ENCODE measurements at regions of chr19 and their contacts with region 1.

Region 1: GRCh38 chr19:38658462-38659306 is 11.2 kb downstream of the ACTN4 start:
- DNase-seq: no peak
- H3K4me3 Mint-ChIP-seq: no peak overlapping the region
- H3K27ac Mint-ChIP-seq: no peak overlapping the region
- H3K4me1 Mint-ChIP-seq: peaks cover 59% of the 10 kb centered on the region
- H3K27me3 Mint-ChIP-seq: peaks cover 13% of the 10 kb centered on the region

Region 2: DNA sequence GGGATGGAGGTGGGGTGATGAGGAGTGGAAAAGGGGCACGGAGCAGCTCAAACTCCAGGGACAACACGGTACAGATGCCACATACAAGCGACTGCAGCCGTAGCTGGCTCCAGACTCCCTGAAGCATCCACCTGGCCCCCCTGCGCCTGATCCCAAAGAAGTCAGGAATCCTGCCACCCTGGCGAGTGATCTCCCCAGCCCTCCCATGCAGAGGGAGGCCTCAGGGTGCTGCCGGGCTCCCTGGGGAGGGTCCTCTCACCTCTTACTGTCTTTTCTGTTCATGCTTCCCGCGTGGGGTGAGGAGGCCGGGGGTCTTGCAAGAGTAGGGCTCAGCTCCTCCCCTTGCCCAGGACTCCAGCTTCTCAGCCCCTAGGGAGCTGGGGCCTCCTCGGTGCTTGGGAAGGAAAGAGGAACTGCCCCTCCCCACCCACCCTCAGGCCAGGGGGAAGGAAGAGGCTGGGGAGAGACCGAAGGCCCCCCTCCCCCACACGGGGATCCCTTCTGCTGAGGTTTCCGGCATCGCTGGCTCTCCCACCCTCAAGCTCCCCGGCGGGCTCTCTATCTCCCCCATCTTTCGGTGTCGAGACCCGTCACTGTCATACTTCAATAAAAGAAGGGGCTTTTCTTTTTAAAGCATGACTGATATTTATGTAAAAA is 232.7 kb before region 1 on chr19 and contains the start of gene RASGRP4:
- CTCF ChIA-PET with region 1: no interaction called
- intact Hi-C with region 1: loop called (anchors 2 kb)
- DNase-seq: peak; percentile 78
- H3K4me3 Mint-ChIP-seq: no peak within 1 kb of the TSS
- H3K27ac Mint-ChIP-seq: peak within 1 kb of the TSS; percentile 61
- H3K4me1 Mint-ChIP-seq: peaks cover 31% of the 10 kb centered on the region
- H3K27me3 Mint-ChIP-seq: peaks cover 2% of the 10 kb centered on the region
- total RNA-seq, gene RASGRP4: 0.30 to 0.41 TPM

Region 3: DNA sequence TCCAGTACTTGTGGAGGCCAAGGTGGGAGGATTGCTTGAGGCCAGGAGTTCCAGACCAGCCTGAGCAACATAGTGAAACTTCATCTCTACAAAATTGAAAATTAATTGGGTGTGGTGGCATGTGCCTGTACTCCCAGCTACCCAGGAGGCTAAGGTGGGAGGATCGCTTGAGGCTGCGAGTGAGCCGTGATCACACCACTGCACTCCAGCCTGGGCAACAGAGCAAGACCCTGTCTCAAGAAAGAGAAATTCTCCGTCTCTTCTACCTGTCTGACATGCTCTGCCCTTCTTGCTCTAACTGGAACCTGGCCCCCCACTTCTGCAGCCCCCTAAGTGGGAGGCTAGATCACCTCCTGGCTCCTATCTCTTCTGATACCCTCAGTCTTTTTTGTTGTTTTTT is 32.3 kb before region 1 on chr19:
- CTCF ChIA-PET with region 1: no interaction called
- intact Hi-C with region 1: no loop called
- DNase-seq: no peak
- H3K4me3 Mint-ChIP-seq: no peak overlapping the region
- H3K27ac Mint-ChIP-seq: no peak overlapping the region
- H3K4me1 Mint-ChIP-seq: peaks cover 3% of the 10 kb centered on the region
- H3K27me3 Mint-ChIP-seq: no peaks in the 10 kb centered on the region

Region 4: DNA sequence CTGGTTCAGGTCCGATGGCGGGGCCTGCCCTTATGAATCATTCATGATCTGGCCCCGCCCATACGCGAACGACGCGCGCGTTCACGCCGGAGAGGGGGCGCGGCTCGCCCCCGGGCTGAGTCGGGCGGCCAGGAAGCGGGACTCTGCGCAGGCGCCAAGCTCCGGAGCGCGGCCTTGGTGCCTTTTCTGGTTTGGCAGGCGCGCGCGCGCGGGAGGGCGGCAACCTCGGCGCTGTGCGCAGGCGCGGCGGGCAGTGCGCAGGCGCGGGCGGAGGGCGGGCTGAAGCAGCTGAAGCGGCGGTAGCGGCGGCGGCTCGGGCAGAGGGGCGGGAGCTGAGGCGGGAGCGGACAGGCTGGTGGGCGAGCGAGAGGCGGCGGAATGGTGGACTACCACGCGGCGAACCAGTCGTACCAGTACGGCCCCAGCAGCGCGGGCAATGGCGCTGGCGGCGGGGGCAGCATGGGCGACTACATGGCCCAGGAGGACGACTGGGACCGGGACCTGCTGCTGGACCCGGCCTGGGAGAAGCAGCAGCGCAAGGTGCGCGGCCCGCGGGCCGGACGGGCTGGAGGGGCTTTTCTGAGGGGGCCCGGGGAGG is 11.2 kb before region 1 on chr19 and contains the start of gene ACTN4:
- CTCF ChIA-PET with region 1: interaction called, 5 read pairs
- intact Hi-C with region 1: loop called (anchors 1 kb)
- DNase-seq: peak; percentile 99
- H3K4me3 Mint-ChIP-seq: peak within 1 kb of the TSS; percentile 96
- H3K27ac Mint-ChIP-seq: peak within 1 kb of the TSS; percentile 30
- H3K4me1 Mint-ChIP-seq: peaks cover 30% of the 10 kb centered on the region
- H3K27me3 Mint-ChIP-seq: peaks cover 29% of the 10 kb centered on the region
- total RNA-seq, gene ACTN4: 117 to 119 TPM

Region 5: GRCh38 chr19:38685666-38686529 is 27.2 kb after region 1 on chr19:
- CTCF ChIA-PET with region 1: no interaction called
- intact Hi-C with region 1: loop called (anchors 1 kb)
- DNase-seq: peak; percentile 23
- H3K4me3 Mint-ChIP-seq: no peak overlapping the region
- H3K27ac Mint-ChIP-seq: peak overlapping the region; percentile 31
- H3K4me1 Mint-ChIP-seq: peaks cover 45% of the 10 kb centered on the region
- H3K27me3 Mint-ChIP-seq: no peaks in the 10 kb centered on the region

Region 6: DNA sequence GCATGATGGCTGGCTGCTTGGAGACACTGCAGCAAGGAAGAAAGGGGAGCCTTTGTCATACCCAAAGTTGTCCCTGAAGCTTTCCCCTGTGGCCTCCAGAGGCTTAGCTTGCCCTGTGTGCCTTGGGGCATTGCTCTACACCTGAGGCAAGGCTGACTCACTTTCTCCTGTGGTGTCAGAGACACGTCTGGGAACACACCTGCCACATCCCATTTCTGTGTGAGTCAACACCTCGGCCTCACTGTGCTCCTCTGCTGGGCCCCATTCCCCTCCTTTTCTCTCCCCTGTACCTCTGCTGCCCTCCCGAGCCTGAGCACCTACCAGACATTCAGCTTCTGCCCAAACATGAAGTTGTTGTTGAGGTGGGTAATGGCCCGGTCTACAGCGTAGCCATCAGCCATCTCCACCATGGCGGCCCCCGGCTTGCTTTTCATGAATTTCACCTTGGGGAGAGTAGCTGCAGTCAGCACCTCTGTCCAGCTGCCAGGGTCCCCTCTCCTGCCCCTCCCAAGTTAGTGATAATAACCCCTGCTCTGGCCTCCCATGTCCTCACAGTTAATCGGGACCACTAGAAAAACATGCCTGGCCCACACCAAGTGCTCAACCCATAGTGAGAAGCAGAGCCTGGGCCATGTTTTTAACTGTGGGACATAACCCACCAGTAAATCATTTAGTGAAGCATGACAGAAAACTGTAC is 180.0 kb after region 1 on chr19:
- CTCF ChIA-PET with region 1: no interaction called
- intact Hi-C with region 1: loop called (anchors 1 kb)
- DNase-seq: peak; percentile 94
- H3K4me3 Mint-ChIP-seq: peak overlapping the region; percentile 37
- H3K27ac Mint-ChIP-seq: peak overlapping the region; percentile 89
- H3K4me1 Mint-ChIP-seq: peaks cover 63% of the 10 kb centered on the region
- H3K27me3 Mint-ChIP-seq: no peaks in the 10 kb centered on the region

Region 7: DNA sequence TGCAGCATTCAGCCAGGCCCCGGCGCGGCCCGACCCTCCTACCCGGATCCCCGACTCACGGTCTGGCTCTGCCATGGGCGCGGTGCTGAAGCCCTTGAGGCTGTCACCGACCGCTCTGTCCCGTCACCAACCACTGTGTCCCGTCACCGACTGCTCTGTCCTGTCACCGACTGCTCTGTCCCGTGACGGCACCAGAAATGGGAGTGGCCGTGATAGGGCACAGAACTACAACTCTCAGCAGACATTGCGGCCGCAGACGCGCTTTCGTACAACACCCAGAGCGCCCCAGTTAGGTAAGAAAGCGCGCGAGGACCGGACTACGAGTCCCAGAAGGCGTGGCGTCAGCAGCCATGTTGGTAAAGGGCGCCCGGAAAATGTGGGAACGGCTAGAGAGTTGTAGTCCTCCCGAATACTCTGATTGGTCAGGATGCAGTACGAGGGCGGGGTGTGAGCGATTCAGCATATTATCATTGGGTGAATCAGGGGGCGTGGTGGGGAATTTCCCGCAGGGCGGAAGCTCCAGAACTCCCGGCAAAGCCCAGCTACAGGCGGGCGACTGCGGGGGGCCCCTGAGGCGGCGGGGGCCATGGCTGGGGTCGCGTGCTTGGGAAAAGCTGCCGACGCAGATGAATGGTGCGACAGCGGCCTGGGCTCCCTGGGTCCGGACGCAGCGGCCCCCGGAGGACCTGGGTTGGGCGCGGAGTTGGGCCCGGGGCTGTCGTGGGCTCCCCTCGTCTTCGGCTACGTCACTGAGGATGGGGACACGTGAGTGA is 240.9 kb after region 1 on chr19 and contains the starts of genes NFKBIB and SIRT2:
- CTCF ChIA-PET with region 1: no interaction called
- intact Hi-C with region 1: loop called (anchors 5 kb)
- DNase-seq: peak; percentile 100
- H3K4me3 Mint-ChIP-seq: peak within 1 kb of the TSS; percentile 96
- H3K27ac Mint-ChIP-seq: peak within 1 kb of the TSS; percentile 86
- H3K4me1 Mint-ChIP-seq: peaks cover 41% of the 10 kb centered on the region
- H3K27me3 Mint-ChIP-seq: no peaks in the 10 kb centered on the region
- total RNA-seq, gene NFKBIB: 47.2 to 52.7 TPM
- total RNA-seq, gene SIRT2: 18.2 to 19.6 TPM

Measured in activated naive CD4-positive, alpha-beta T cell treated with anti-CD3 and anti-CD28 coated beads for 36 hours (primary cell).